HEK293 (cell line): ENCODE measurements at regions of chr17 and their contacts with region 1.

Region 1: DNA sequence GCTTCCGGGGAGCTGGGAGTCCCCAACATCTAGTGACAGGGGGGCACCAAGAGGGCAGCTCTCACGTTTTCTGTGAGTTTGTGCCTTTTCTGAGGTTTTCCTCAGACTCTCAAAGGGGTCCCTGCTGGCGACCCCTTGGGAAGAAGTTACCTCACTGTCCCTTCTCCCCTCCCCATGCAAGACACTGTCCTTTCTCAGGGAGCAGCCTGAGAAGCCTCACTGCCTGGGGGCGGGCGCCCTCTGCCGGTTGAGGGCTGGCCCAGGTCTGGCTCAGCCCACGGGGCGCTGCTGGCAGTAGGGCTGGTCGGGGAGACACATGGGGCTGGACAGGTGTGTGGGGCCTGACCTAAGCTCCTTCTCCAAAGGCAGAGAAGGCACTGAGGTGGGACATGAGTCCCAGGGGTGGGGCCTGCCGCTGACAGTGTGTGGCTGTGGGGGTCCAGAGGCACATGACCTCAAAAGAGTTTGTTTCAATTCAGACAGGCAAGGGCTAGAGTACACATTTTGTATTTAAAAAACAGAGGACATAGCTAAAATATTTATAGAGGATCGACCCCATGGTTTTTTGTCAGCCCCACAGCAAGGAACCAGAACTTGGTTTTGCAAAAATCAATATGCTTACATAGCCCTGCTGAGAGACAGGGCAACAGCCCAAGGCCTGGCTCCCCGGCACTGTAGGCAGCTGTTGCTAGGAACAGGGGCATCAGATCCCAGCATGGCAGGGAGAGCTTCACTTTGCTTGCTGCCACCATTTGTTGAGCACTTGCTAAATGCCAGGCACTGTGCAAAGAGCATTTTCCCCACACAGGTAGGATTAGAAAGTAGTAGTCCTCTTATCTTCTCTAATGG is 18.5 kb upstream of the ALDH3A1 start:
- H3K4me3 ChIP-seq: no peak overlapping the region
- H3K27ac ChIP-seq: no peak overlapping the region
- H3K4me1 ChIP-seq: no peaks in the 10 kb centered on the region
- CTCF ChIP-seq: peak; percentile 92

Region 2: DNA sequence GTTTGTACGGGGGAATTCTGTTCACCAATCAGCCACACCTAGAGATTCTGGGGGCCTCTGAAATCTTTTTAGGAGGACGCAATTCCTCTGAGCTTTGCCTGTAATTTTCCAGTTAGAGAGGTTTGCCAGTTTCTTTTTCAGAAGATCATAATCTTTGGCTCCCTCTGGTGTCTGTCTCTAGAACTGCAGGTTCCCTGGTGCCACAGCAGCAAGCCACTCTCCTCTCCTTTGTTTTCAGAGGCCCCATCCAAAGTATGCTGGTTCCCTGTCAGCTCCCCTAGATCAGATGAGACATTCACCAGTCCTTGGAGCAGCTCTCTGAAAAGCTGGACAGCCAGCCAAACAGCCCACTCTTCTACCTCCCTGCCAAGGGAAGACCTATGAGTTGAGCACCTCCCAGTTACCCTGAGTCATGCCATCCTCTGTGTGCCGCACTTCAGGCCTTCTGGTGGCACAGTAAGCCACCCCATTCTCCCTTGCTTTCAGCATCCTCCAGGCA is 319.5 kb before region 1 on chr17:
- CTCF ChIA-PET with region 1: interaction called, 14 read pairs
- POLR2A ChIA-PET with region 1: no interaction called
- H3K4me3 ChIP-seq: no peak overlapping the region
- H3K27ac ChIP-seq: no peak overlapping the region
- H3K4me1 ChIP-seq: peaks cover 8% of the 10 kb centered on the region
- CTCF ChIP-seq: peak; percentile 55; the same call in 1 of the 2 replicates

Region 3: DNA sequence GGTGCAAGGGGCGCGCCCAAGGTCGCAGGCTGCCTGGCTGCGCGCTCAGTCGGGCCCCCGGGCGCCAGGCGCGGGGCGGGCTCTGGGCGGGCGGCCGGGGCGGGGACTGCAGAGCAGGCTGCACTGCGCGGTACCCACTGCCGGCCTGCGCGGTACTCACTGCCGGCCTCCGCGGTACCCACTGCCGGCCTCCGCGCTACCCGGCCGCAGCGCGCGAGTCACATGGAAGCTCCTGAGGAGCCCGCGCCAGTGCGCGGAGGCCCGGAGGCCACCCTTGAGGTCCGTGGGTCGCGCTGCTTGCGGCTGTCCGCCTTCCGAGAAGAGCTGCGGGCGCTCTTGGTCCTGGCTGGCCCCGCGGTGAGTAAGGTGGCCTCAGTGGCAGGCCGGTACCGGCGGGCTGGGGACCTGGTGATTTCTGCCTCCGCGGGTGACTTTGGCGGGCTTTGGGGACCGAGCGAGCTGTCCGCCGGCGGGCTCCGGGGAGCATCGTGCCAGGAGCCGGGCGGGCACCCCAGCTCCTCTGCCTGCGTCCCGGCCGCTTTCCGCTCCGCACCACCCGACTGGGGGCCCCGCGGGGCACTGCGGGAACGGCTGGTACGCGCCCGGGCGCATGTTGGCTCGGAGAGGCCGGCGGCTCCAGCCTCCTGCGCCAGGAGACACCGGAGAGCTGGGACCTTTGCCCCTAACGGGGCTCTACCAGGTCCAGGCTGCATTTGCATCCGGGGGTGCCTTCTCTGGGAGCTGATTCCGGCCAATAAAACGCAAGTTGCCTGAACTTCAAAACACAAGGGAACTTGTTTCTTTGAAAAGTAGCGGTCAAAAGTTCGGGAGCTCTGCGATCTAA is 232.7 kb before region 1 on chr17 and contains the start of gene SLC47A1:
- CTCF ChIA-PET with region 1: interaction called, 14 read pairs
- POLR2A ChIA-PET with region 1: no interaction called
- H3K4me3 ChIP-seq: peak within 1 kb of the TSS; percentile 63
- H3K27ac ChIP-seq: peak within 1 kb of the TSS; percentile 58; the same call in 1 of the 2 replicates
- H3K4me1 ChIP-seq: 0 out of 2 replicates have a peak, but pooled peaks cover 2% of the 10 kb centered on the region
- CTCF ChIP-seq: peak; percentile 9; the same call in 1 of the 2 replicates

Region 4: GRCh38 chr17:19744922-19745757 is 21.5 kb before region 1 on chr17:
- CTCF ChIA-PET with region 1: interaction called, 80 read pairs
- POLR2A ChIA-PET with region 1: interaction called, 8 read pairs
- H3K4me3 ChIP-seq: peak overlapping the region; percentile 35
- H3K27ac ChIP-seq: no peak overlapping the region; the same call in 1 of the 2 replicates
- H3K4me1 ChIP-seq: peaks cover 3% of the 10 kb centered on the region; the same call in 1 of the 2 replicates
- CTCF ChIP-seq: peak; percentile 74

Region 5: GRCh38 chr17:19781488-19782458 is 15.1 kb after region 1 on chr17:
- CTCF ChIA-PET with region 1: interaction called, 38 read pairs
- POLR2A ChIA-PET with region 1: no interaction called
- H3K4me3 ChIP-seq: no peak overlapping the region
- H3K27ac ChIP-seq: no peak overlapping the region
- H3K4me1 ChIP-seq: no peaks in the 10 kb centered on the region
- CTCF ChIP-seq: no peak

Region 6: GRCh38 chr17:19876529-19877161 is 110.0 kb after region 1 on chr17:
- CTCF ChIA-PET with region 1: no interaction called
- POLR2A ChIA-PET with region 1: no interaction called
- H3K4me3 ChIP-seq: no peak overlapping the region
- H3K27ac ChIP-seq: no peak overlapping the region
- H3K4me1 ChIP-seq: no peaks in the 10 kb centered on the region
- CTCF ChIP-seq: no peak